ENCODE measurements at regions of chr11 and their contacts with region 1.

Region 1: DNA sequence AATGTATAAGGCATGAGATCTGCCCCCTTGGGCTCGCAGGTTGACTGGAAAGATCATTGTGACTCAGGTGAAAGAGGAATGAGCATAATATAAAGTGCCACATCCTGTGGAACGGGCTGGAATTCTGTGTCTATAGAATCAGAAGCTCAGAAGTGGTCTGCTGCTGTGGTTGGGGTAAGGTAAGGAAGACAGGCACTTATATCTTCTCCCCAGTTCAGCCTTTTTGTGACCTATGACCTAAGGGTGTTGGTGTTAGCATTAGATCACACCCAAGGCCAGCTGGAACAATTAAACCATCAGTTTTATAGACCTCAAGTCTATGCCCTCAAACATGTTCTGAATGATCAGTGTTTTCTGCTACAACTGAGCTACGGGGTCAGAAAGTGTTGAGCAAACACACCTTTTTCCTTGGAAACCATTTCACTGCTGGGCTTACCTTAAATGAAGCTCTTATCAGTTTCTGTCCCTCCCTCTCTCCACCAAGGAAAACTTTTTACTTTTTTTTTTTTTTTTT is 15.7 kb upstream of the POU2AF3 start:
- DNase-seq: no peak
- H3K27ac ChIP-seq: no peak overlapping the region
- CTCF ChIP-seq: no peak

Region 2: DNA sequence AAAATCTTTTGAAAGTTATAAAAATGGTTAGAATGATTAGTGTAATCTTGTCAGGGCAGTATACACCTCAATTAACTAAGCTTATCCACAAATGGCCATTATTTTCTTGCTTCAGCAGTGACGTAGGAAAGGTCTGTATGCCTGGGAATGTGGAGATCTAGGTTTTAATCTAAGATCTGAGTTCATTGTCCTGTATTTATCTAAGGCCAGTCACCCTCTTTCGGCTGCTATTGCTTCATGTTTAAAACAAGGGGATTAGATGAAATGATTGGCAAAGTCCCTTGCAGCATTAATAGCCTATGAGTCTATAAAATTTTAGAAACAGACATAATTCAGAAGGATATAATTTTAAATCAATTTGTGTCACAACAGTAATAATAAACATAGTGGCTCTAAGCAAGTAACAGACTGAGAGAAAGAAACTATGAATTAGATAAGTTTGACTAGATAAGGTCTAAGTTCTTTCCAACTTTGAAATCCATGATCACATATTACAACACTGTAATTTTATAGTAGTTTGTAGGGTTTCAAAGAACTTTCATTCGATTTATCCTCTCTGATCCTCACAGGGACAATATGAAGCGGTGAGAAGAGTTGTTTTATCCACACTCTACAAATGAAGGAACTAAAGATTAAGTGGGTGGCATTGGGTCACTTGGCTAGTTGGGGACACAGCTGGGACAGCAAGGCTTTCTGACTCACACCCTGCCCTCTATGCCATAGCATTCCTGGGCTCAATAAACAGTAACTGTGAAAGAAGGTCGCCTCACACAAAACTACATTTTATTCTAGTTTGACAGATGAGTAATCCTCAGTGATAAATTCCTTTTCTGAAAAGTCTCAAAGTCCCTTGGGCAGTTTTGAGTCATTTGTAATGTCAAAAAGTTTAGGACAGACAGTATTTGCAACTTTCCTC is 925.6 kb before region 1 on chr11:
- CTCF ChIA-PET with region 1: no interaction called
- POLR2A ChIA-PET with region 1: no interaction called
- DNase-seq: no peak
- H3K27ac ChIP-seq: no peak overlapping the region
- CTCF ChIP-seq: no peak

Region 3: DNA sequence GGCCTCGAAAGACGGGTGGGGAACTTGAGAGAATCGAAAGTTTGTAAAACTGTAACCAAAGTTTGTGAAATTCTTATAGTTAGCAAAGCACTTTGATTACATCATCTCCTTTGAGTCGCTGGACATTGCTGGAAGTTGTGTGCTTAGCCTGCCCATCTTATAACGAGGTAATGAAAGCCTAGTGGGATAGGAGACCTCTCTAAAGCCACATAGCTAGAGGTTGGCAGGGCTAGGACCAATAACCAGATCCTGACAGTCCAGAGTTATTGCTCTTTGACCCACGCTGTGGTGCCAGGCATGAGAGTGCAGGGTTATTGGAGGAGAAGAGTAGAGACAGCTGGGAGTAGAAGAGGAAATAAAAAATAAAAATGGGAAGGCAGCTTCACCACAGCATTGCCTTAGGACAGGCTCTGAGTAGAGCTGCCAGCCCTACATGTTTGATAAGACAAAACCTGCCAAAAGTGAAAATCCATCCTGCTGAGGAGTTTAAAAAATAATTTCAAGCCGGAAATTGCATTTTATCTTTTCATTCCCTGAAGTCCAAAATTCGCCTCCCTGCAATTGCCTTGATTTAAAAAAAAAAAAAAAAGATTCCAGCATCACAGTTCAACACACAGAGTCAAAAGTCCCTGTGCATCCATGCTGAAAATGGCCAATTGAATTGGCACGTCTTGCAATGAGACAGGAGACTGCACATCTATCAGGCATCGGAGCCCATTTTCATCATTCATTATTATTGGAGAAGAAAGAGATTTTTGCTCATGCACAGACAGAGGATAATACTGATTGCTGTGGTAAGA is 262.5 kb before region 1 on chr11:
- CTCF ChIA-PET with region 1: interaction called, 10 read pairs
- POLR2A ChIA-PET with region 1: no interaction called
- DNase-seq: no peak
- H3K27ac ChIP-seq: no peak overlapping the region
- CTCF ChIP-seq: no peak

Region 4: DNA sequence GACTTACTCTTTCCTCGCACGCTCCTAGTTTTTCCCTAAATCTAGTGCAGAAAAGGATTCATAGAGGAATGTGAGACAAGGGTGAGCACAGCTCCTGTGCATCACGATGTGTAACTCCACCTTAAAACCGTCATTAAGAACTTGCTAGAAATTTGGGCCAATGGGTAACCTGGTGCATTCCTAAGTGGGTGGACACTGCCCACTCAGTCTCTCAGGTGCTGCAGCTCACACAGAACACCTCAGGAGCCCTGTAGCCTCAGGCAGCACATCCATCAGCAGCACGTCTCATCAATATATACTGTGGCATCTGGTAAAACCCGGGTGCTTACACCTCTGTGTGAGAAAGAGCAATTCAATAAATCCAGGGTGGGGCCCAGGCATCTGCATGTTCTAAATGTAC is 28.1 kb after region 1 on chr11:
- CTCF ChIA-PET with region 1: no interaction called
- POLR2A ChIA-PET with region 1: no interaction called
- DNase-seq: no peak
- H3K27ac ChIP-seq: no peak overlapping the region
- CTCF ChIP-seq: no peak

Region 5: DNA sequence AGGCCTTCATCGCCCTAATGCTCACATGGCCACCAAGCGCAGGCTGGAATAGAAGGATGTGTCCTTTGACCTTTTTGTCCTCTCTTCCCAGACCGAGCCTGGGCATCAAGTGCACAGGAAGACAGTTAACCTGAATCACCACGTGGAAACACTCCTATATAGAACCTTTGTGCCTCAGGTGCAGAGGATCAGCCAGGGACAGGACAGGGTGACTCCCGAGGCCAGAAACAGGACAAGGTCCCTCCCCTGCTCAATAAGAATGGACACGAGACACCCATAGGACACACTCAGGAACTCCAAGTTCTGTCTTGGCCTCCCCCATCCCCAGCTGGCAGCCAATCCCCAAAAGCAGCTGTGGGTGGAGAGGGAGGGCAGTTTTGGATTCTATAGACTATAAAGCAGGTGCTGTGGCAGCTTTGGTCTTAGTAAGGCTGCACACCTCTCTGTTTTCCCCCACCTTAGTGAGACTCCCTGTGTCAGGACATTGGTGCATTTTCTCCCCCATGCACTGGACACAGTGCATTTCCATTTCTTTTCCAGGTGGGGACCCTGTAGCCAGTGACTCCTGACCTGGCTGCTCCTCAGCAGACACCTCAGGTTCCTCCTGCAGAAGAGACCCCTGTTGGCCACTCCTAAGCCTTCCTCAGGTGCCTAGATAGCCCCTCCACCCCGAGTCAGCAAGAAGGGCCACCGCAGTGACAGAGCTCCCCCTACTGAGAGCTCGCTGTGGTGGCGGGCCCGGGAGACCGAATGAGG is 140.1 kb after region 1 on chr11:
- CTCF ChIA-PET with region 1: interaction called, 12 read pairs
- POLR2A ChIA-PET with region 1: no interaction called
- DNase-seq: no peak
- H3K27ac ChIP-seq: no peak overlapping the region
- CTCF ChIP-seq: no peak

Region 6: DNA sequence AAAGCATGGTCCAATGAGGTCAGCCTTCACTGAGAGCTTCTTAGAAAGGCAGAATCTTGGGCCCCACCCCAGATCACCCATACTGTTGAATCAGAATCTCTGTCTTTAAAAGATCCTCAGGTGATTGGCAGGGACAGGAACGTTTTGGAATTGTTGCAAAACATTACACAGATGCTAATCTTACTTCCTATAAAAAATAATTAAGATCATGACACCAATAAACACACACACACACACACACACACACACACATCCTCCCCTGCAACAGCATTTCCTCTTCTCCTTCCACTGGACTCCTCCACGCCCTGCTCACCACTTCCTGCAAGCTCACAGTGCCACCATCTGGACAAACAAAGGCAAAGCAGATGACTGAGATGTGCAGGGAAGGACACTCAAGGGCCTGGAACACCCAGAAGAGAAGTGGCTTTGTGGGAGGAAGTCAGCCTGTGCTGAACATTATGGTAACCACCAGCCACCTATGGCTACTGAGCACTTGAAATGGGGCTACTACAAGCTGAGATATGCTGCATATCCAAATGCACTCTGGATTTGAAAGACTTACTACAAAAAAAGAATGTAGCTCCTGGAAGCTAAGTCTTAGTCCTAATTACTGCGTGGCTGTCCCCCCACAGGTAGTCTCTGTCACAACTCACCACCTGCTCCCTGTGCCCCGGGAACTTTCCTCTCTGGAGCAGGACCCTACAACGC is 163.9 kb after region 1 on chr11:
- CTCF ChIA-PET with region 1: interaction called, 28 read pairs
- POLR2A ChIA-PET with region 1: no interaction called
- DNase-seq: peak; percentile 88
- H3K27ac ChIP-seq: no peak overlapping the region
- CTCF ChIP-seq: peak; percentile 85

Measured in RWPE1 (cell line).